ENCODE measurements at regions of chr6 and their contacts with region 1.

Region 1: DNA sequence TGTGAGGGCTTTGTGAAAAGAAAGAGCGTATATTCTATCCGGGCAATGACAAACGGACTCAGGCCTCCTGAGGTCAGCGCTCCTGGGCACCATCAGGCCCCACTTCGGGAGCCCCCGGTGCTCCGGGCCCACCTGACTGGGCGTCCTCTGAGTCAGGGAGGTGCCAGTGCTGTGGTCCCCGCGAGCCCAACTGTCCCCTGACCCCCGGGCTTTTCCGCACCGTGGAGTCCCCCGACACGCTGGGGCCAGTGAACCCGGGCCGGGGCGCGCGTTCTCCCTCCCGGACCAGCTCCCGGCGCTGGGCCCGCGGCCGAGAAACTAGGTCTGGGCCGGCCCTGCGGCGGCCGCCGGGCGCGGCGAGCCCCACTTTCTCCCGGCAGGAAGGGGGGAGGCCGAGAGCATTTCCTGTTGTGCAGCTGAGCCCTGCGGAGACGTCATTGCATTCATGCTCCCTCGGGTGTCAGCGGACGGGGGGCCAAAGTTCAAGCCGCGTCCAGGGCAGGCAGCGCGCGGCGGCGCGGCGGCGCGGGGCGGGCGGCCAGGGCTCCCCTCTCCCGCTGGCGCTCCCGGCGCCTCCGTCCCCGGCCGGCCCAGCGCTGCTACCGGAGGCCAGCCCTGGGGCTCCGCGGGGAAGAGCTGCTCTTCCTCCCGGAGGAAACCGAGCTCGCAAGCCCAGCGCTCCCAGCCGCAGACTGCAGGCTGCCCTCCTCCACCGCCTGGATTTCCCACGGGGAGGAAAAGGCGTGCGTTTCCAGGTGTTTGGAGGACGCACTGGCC is 18.3 kb downstream of the HIVEP2 start:
- DNase-seq: peak; percentile 82 to 87 (median 86)
- H3K4me3 ChIP-seq: peak overlapping the region; percentile 82 to 86
- H3K4me3 Mint-ChIP-seq: peak overlapping the region; percentile 88 to 99 (median 94)
- H3K27ac ChIP-seq: peak overlapping the region; percentile 98
- H3K27ac Mint-ChIP-seq: peak overlapping the region; percentile 90 to 100 (median 98)
- H3K4me1 ChIP-seq: peaks cover 60% of the 10 kb centered on the region
- H3K4me1 Mint-ChIP-seq: peaks cover 42 to 77% (median 56%) of the 10 kb centered on the region in 4 donors
- H3K27me3 ChIP-seq: no peaks in the 10 kb centered on the region
- H3K27me3 Mint-ChIP-seq: no peaks in the 10 kb centered on the region

Region 2: DNA sequence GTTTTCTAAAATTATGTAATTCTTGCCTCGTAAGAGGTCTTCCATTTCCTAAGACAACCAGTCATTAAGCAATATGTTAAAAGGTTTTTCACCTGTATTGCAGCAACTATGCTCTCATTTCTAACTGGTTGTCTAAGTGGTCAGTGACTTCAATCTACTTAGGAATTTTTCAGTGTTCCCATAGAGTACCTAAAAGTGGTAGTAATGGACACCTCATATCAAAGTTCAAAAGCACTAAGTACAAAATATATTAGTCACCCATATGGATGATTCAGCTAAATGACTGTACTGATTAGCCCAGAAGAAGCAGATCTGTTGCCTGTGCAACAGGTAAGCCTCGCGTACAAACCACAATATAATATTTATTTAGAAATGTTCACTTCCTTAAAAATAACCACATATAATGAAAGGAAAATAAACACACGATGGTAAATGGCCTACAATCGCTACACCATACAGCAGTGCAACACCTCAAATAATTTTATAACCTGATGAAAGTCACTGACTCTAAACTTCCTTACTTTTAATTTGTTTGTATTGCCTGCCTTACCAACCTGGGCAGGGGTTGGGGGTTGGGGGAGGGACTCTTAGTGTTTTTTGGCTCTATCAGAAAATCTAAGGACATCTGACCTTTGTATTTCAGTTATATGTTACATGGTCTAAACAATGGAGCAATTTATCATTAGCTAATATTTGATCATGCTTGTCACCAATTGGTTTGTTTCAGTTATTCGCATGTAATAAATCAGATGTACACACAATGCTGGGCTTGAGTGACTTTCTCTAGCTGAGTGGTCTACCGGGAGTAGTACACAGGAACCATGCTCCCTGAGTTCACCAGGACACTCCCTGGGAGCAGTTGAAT is 87.6 kb before region 1 on chr6:
- CTCF ChIA-PET with region 1: no interaction called
- POLR2A ChIA-PET with region 1: interaction called, 35 read pairs
- intact Hi-C with region 1: no loop called
- DNase-seq: no peak
- H3K4me3 ChIP-seq: no peak overlapping the region
- H3K4me3 Mint-ChIP-seq: peak overlapping the region; percentile 69 to 90 (median 76)
- H3K27ac ChIP-seq: peak overlapping the region; percentile 25
- H3K27ac Mint-ChIP-seq: peak overlapping the region; percentile 77 to 94 (median 88)
- H3K4me1 ChIP-seq: peaks cover 84% of the 10 kb centered on the region
- H3K4me1 Mint-ChIP-seq: peaks cover 59 to 85% (median 72%) of the 10 kb centered on the region in 4 donors
- H3K27me3 ChIP-seq: no peaks in the 10 kb centered on the region
- H3K27me3 Mint-ChIP-seq: no peaks in the 10 kb centered on the region

Region 3: DNA sequence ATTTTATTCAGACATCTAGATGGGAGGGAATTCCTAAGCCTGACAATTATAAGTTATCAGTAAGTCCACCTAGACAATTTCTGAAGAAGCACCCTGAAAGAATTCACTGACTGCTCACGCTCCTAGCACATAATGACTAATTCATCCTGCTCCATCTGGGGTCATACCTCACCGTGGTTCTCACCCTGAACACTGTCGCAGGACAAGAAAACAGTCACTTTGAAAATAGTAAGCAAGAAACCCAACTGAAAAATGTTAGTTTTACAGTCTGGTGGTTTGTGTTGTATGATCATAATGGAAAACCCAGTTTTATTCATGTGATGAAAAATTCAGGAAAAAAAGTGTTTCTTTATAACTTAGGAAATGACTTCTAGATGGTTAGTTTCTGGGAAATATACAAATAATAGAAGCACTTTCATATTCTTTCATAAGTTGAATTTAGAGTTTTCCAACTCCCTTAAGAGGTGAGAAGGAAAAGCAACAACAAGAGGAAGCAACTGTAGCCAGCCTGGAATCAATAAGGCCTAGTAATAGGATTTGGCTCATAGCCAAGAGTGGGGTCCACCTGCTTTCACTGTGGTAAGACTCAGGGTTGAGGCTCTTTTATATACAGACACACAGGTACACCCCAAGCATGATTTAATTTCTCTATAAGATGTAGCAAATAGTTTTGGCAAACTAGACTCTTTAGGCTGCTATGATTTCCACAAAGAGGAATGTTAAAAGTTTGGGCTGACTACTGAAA is 75.8 kb before region 1 on chr6:
- CTCF ChIA-PET with region 1: interaction called, 4 read pairs
- POLR2A ChIA-PET with region 1: interaction called, 54 read pairs
- intact Hi-C with region 1: loop called (anchors 5 kb)
- DNase-seq: peak in 1 of 5 donors; percentile 76
- H3K4me3 ChIP-seq: no peak overlapping the region
- H3K4me3 Mint-ChIP-seq: peak overlapping the region; percentile 62 to 86 (median 78)
- H3K27ac ChIP-seq: peak overlapping the region; percentile 46
- H3K27ac Mint-ChIP-seq: peak overlapping the region; percentile 88 to 96 (median 94)
- H3K4me1 ChIP-seq: peaks cover 100% of the 10 kb centered on the region
- H3K4me1 Mint-ChIP-seq: peaks cover 83 to 100% (median 92%) of the 10 kb centered on the region in 4 donors
- H3K27me3 ChIP-seq: no peaks in the 10 kb centered on the region
- H3K27me3 Mint-ChIP-seq: no peaks in the 10 kb centered on the region

Region 4: GRCh38 chr6:142857233-142857761 is 69.4 kb before region 1 on chr6:
- CTCF ChIA-PET with region 1: no interaction called
- POLR2A ChIA-PET with region 1: interaction called, 54 read pairs
- intact Hi-C with region 1: loop called (anchors 5 kb)
- DNase-seq: peak; percentile 55 to 66 (median 61)
- H3K4me3 ChIP-seq: peak overlapping the region; percentile 32 to 51
- H3K4me3 Mint-ChIP-seq: peak overlapping the region; percentile 81 to 94 (median 86)
- H3K27ac ChIP-seq: peak overlapping the region; percentile 81
- H3K27ac Mint-ChIP-seq: peak overlapping the region; percentile 91 to 98 (median 95)
- H3K4me1 ChIP-seq: peaks cover 96% of the 10 kb centered on the region
- H3K4me1 Mint-ChIP-seq: peaks cover 75 to 95% (median 86%) of the 10 kb centered on the region in 4 donors
- H3K27me3 ChIP-seq: no peaks in the 10 kb centered on the region
- H3K27me3 Mint-ChIP-seq: no peaks in the 10 kb centered on the region

Region 5: GRCh38 chr6:142913511-142914047 is 13.1 kb before region 1 on chr6:
- CTCF ChIA-PET with region 1: interaction called, 6 read pairs
- POLR2A ChIA-PET with region 1: interaction called, 111 read pairs
- intact Hi-C with region 1: loop called (anchors 1 kb)
- DNase-seq: peak; percentile 78 to 88 (median 81)
- H3K4me3 ChIP-seq: peak overlapping the region; percentile 14 to 57
- H3K4me3 Mint-ChIP-seq: peak overlapping the region; percentile 84 to 95 (median 88)
- H3K27ac ChIP-seq: peak overlapping the region; percentile 85
- H3K27ac Mint-ChIP-seq: peak overlapping the region in 6 of 7 donors; percentile 98 to 100 (median 99)
- H3K4me1 ChIP-seq: peaks cover 97% of the 10 kb centered on the region
- H3K4me1 Mint-ChIP-seq: peaks cover 71 to 86% (median 80%) of the 10 kb centered on the region in 4 donors
- H3K27me3 ChIP-seq: no peaks in the 10 kb centered on the region
- H3K27me3 Mint-ChIP-seq: no peaks in the 10 kb centered on the region